Heart left ventricle (tissue), 16 donors: ENCODE measurements at regions of chr9 and their contacts with region 1.

Region 1: GRCh38 chr9:37415011-37415719 is 7.3 kb upstream of the GRHPR start:
- DNase-seq: peak in 4 of 5 donors; percentile 45 to 68 (median 60)
- ATAC-seq: peak; percentile 45 to 76 (median 66)
- H3K4me3 ChIP-seq: peak overlapping the region in 1 of 12 donors; percentile 12
- H3K27ac ChIP-seq: peak overlapping the region in 3 of 12 donors; percentile 25 to 37 (median 31)
- H3K4me1 ChIP-seq: peaks cover 0 to 21% (median 6%) of the 10 kb centered on the region in 12 donors
- H3K27me3 ChIP-seq: no peaks in the 10 kb centered on the region
- CTCF ChIP-seq: peak; percentile 72 to 88 (median 80)
- POLR2A ChIP-seq: no peak

Region 2: DNA sequence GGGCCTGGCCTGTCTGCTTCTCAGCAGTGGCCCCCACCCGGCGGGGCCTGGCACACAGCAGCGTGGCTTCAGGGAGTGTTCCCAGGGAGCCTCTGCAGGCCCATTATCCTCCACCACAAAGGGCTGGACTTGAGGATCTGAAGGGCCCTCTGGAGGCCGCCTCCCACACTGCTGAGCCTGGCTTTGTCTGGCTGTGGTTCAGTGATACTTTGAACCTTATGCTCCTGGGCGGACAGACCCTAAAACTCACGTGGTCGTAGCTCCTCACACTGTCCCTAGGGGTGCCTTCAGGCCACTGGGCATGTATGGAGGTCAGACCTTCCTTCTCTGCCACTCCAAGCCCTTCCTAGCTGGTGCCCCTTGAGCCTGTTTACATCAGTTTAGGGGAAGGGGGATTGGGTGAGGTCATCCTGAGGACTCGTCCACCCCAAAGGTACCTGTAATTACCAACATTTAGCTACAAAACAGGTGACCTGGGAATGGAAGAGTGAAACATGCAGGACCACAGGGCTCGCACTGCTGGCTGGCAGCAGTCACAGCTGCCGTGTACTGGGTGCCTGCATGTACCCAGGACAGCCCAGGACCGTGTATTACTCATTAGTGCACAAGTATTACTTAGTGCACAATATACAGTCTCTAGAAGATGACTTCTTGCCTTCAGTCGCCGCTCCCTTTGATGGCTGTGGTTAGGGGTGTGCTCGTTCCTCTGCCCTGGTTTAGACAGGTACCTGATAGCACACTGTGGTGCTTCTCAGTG is 15.9 kb after region 1 on chr9:
- intact Hi-C with region 1: loop called in 1 of 10 experiments (anchors 2 kb)
- DNase-seq: no peak
- ATAC-seq: peak in 3 of 4 donors; percentile 5 to 25 (median 14)
- H3K4me3 ChIP-seq: no peak overlapping the region
- H3K27ac ChIP-seq: no peak overlapping the region
- H3K4me1 ChIP-seq: peaks cover 0 to 25% (median 11%) of the 10 kb centered on the region in 12 donors
- H3K27me3 ChIP-seq: no peaks in the 10 kb centered on the region
- CTCF ChIP-seq: no peak
- POLR2A ChIP-seq: no peak

Region 3: GRCh38 chr9:37465249-37466036 is 50.3 kb after region 1 on chr9 and contains the start of gene ZBTB5:
- intact Hi-C with region 1: loop called in 6 of 10 experiments (anchors 2 to 5 kb)
- DNase-seq: peak; percentile 99 to 100 (median 99)
- ATAC-seq: peak; percentile 89 to 93 (median 92)
- H3K4me3 ChIP-seq: peak within 1 kb of the TSS; percentile 68 to 99 (median 92)
- H3K27ac ChIP-seq: peak within 1 kb of the TSS; percentile 86 to 99 (median 97)
- H3K4me1 ChIP-seq: peaks cover 0 to 40% (median 25%) of the 10 kb centered on the region in 12 donors
- H3K27me3 ChIP-seq: no peaks in the 10 kb centered on the region
- CTCF ChIP-seq: no peak
- POLR2A ChIP-seq: peak in 1 of 2 donors; percentile 92
- total RNA-seq, gene ZBTB5: 5.2 to 8.0 (median 6.3) TPM

Region 4: GRCh38 chr9:37508834-37509206 is 93.7 kb after region 1 on chr9:
- intact Hi-C with region 1: loop called in 1 of 10 experiments (anchors 2 kb)
- DNase-seq: peak in 1 of 5 donors; percentile 11
- ATAC-seq: no peak
- H3K4me3 ChIP-seq: no peak overlapping the region
- H3K27ac ChIP-seq: no peak overlapping the region
- H3K4me1 ChIP-seq: no peaks in the 10 kb centered on the region
- H3K27me3 ChIP-seq: no peaks in the 10 kb centered on the region
- CTCF ChIP-seq: peak in 1 of 12 donors; percentile 23
- POLR2A ChIP-seq: no peak